ENCODE measurements at regions of chr7 and their contacts with region 1.

Region 1: GRCh38 chr7:23712368-23713284 is 2.6 kb downstream of the STK31 start:
- DNase-seq: peak; percentile 29
- H3K4me3 ChIP-seq: no peak overlapping the region
- CTCF ChIP-seq: no peak

Region 2: GRCh38 chr7:23696916-23697441 is 15.6 kb before region 1 on chr7:
- CTCF ChIA-PET with region 1: interaction called, 61 read pairs
- POLR2A ChIA-PET with region 1: no interaction called
- DNase-seq: no peak
- H3K4me3 ChIP-seq: no peak overlapping the region
- CTCF ChIP-seq: peak; percentile 66

Region 3: DNA sequence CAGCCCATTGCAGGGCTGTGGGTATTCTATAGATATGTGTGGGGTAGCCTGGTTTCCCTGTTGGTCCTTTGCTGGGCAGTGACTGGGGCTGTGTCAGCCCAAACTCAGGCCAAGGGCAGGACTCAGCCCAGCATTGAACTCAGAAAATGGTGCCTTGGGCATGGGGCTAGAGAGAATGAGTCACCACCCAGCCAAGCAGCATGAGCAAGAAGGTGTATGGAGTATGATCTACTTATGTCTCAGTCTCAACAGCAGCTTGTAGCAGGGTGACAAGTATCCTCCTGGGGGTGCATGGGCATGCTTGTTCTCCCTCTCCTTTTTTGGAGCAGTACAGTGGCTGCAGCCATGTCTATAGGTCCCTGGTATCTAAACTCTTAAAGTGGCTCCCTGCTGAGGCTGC is 29.4 kb after region 1 on chr7:
- CTCF ChIA-PET with region 1: no interaction called
- POLR2A ChIA-PET with region 1: no interaction called
- DNase-seq: no peak
- H3K4me3 ChIP-seq: no peak overlapping the region
- CTCF ChIP-seq: no peak